SK-N-SH (cell line): ENCODE measurements at regions of chr1 and their contacts with region 1.

Region 1: DNA sequence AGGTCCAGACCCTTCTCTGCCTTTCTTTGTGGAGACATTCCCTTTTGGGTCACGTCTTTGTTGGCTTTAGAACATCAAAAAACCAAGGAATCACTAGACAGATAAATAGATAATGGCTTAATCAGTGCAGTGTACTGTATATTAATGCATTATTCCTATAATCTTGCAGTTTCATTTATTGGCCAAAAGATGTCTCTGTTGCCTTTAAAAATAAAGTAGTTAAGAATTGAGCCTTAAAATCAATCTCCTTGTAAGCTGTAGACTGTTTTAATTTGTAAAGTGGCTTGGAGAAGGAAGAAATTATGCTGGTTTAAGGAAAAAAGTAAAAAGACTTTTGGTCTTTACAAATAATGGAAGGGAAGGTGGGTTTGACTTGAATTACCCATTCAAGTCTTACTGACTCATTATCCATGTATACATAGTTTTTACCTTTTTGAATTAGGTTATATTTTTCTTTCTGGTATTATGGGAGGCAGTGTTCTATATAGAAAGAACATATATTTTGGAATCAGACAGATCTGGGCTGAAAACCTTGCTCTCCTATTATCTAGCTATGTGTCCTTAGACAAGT is 84.6 kb downstream of the VPS13D start:
- DNase-seq: peak; percentile 28
- H3K4me3 ChIP-seq: no peak overlapping the region
- H3K27ac ChIP-seq: no peak overlapping the region; a peak in 1 of 4 replicates
- H3K4me1 ChIP-seq: no peaks in the 10 kb centered on the region; a peak in 2 of 4 replicates
- H3K27me3 ChIP-seq: no peaks in the 10 kb centered on the region
- CTCF ChIP-seq: peak; percentile 75
- EP300 ChIP-seq: no peak
- RAD21 ChIP-seq: peak; percentile 77

Region 2: DNA sequence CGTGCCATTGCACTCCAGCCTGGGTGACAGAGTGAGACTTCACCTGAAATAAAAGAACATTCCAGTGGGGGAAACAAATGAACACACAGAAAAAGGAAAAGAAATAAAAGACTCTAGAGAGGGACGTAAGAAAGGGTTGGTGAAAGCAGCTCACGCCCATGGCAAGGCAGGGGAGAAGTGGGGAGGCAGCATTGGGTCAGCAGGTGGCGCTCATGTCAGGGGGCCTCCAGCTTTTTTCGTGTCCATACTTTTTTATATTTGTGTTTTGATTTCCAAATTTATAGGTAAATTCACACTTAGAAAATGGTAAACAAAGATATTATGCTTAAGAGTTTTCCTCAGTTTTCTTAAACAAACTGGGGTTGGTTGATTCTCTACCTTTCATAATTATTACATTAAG is 39.0 kb before region 1 on chr1:
- CTCF ChIA-PET with region 1: interaction called, 11 read pairs
- POLR2A ChIA-PET with region 1: no interaction called
- DNase-seq: peak; percentile 37
- H3K4me3 ChIP-seq: no peak overlapping the region; a peak in 1 of 4 replicates
- H3K27ac ChIP-seq: no peak overlapping the region
- H3K4me1 ChIP-seq: no peaks in the 10 kb centered on the region
- H3K27me3 ChIP-seq: no peaks in the 10 kb centered on the region
- CTCF ChIP-seq: peak; percentile 70
- EP300 ChIP-seq: no peak
- RAD21 ChIP-seq: peak; percentile 57